Naive thymus-derived CD4-positive, alpha-beta T cell (primary cell): ENCODE measurements at regions of chr19 and their contacts with region 1.

Region 1: DNA sequence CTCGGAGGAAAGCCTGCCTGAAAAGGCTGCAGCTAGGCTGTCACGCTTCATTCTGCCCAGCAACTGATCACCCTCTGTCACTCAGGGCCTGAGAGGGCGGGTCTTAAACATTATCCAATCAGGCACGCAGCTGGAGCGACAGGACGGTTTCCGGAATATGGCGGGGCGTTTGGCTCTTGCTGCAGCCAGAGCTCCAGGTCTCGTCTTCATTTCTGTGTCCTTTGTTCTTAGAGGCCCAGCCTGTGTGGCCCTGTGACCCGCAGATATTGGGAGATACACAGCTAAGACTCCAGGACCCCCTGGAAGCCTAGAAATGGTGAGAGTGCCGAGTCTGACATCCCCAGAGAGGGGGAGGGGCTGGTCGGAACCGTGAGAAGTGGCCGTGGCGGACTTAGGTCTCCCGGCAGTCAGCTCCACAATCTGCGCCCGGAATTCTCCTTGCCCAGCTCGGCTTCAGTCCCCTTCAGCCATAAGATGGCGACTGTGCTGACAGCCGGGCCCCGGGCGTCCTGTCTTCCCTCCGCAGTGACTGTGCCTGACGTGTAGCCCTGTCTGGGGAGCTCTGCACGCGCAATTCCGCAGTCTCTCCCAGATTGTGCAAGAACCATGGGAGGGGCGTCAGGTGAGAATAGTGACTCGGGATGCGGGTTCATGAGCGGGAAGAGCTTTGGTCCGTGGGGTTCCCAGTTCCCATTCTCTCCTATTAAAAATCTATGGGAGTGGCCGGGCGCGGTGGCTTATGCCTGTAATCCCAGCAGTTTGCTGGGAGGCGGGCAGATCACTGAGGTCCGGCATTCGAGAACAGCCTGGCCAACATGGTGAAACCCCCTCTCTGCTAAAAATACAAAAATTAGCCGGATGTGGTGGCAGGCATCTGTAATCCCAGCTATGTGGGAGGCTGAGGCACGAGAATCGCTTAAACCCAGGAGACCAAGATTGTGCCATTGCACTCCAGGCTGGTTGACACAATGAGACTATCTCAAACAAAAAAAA is at the start of gene ZNF429:
- DNase-seq: peak; percentile 64 to 94 (median 90)
- ATAC-seq: peak; percentile 100
- H3K4me3 ChIP-seq: peak within 1 kb of the TSS; percentile 100
- H3K4me3 Mint-ChIP-seq: peak within 1 kb of the TSS; percentile 97 to 100 (median 100)
- H3K27ac ChIP-seq: peak within 1 kb of the TSS; percentile 94
- H3K27ac Mint-ChIP-seq: peak within 1 kb of the TSS; percentile 98 to 100 (median 99)
- H3K4me1 ChIP-seq: peaks cover 16 to 27% of the 10 kb centered on the region in 2 donors
- H3K4me1 Mint-ChIP-seq: peaks cover 8 to 56% (median 50%) of the 10 kb centered on the region in 7 donors
- H3K27me3 ChIP-seq: no peaks in the 10 kb centered on the region
- H3K27me3 Mint-ChIP-seq: no peaks in the 10 kb centered on the region
- total RNA-seq, gene ZNF429: 6.4 to 30.7 (median 25.0) TPM

Region 2: GRCh38 chr19:20077791-20078463 is 1427.8 kb before region 1 on chr19 and contains the start of gene ZNF90:
- CTCF ChIA-PET with region 1: no interaction called
- POLR2A ChIA-PET with region 1: no interaction called
- intact Hi-C with region 1: loop called in 1 of 2 experiments (anchors 5 kb)
- DNase-seq: peak; percentile 57 to 90 (median 84)
- ATAC-seq: peak; percentile 99
- H3K4me3 ChIP-seq: peak within 1 kb of the TSS; percentile 86
- H3K4me3 Mint-ChIP-seq: peak within 1 kb of the TSS; percentile 86 to 89 (median 88)
- H3K27ac ChIP-seq: no peak within 1 kb of the TSS
- H3K27ac Mint-ChIP-seq: peak within 1 kb of the TSS; percentile 31 to 82 (median 54)
- H3K4me1 ChIP-seq: peaks cover 4 to 8% of the 10 kb centered on the region in 2 donors
- H3K4me1 Mint-ChIP-seq: peaks cover 0 to 27% (median 14%) of the 10 kb centered on the region in 7 donors
- H3K27me3 ChIP-seq: no peaks in the 10 kb centered on the region
- H3K27me3 Mint-ChIP-seq: no peaks in the 10 kb centered on the region
- total RNA-seq, gene ZNF90: 3.4 to 7.7 (median 4.5) TPM

Region 3: GRCh38 chr19:20776083-20777076 is 729.4 kb before region 1 on chr19 and contains the start of gene ZNF66:
- CTCF ChIA-PET with region 1: no interaction called
- POLR2A ChIA-PET with region 1: no interaction called
- intact Hi-C with region 1: loop called (anchors 1 to 5 kb)
- DNase-seq: peak; percentile 84 to 96 (median 95)
- ATAC-seq: peak; percentile 99
- H3K4me3 ChIP-seq: peak within 1 kb of the TSS; percentile 99
- H3K4me3 Mint-ChIP-seq: peak within 1 kb of the TSS; percentile 92 to 100 (median 99)
- H3K27ac ChIP-seq: peak within 1 kb of the TSS; percentile 81
- H3K27ac Mint-ChIP-seq: peak within 1 kb of the TSS; percentile 86 to 97 (median 93)
- H3K4me1 ChIP-seq: peaks cover 0 to 5% of the 10 kb centered on the region in 2 donors
- H3K4me1 Mint-ChIP-seq: peaks cover 3 to 44% (median 31%) of the 10 kb centered on the region in 7 donors
- H3K27me3 ChIP-seq: no peaks in the 10 kb centered on the region
- H3K27me3 Mint-ChIP-seq: no peaks in the 10 kb centered on the region
- total RNA-seq, gene ZNF66: 7.6 to 18.5 (median 12.2) TPM

Region 4: DNA sequence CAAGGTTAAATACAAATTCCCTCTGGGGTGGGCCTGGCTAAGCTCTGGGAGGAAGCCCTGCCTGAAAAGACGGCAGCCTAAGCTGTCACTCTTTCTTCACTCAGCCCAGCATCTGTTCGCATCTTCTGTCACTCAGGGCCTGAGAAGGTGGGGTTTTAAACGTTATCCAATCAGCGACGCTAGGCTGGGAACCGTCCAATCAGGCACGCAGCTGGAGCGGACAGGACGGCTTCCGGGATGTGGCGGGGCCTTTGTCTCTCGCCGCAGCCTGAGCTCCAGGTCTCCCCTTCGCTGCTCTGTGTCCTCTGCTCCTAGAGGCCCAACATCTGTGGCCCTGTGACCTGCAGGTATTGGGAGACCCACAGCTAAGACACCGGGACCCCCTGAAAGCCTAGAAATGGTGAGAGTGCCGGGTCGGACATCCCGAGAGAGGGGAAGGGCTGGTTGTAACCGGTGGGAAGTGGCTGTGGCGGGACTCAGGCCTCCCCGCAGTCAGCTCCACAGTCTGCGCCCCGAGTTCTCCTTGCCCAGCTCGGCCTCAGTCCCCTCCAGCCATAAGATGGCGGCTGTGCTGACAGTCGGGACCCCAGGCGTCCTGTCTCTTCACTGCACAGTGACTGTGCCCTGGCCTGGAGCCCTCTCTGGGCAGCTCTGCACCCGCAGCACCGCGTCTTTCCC is 363.8 kb before region 1 on chr19 and contains the start of gene ZNF431:
- CTCF ChIA-PET with region 1: interaction called, 3 read pairs
- POLR2A ChIA-PET with region 1: interaction called, 12 read pairs
- intact Hi-C with region 1: loop called in 1 of 2 experiments (anchors 1 kb)
- DNase-seq: peak; percentile 63 to 95 (median 91)
- ATAC-seq: peak; percentile 100
- H3K4me3 ChIP-seq: peak within 1 kb of the TSS; percentile 94
- H3K4me3 Mint-ChIP-seq: peak within 1 kb of the TSS; percentile 95 to 98 (median 97)
- H3K27ac ChIP-seq: peak within 1 kb of the TSS; percentile 91
- H3K27ac Mint-ChIP-seq: peak within 1 kb of the TSS; percentile 93 to 99 (median 96)
- H3K4me1 ChIP-seq: peaks cover 3 to 6% of the 10 kb centered on the region in 2 donors
- H3K4me1 Mint-ChIP-seq: peaks cover 20 to 69% (median 54%) of the 10 kb centered on the region in 7 donors
- H3K27me3 ChIP-seq: no peaks in the 10 kb centered on the region
- H3K27me3 Mint-ChIP-seq: no peaks in the 10 kb centered on the region
- total RNA-seq, gene ZNF431: 19.1 to 36.8 (median 25.4) TPM

Region 5: DNA sequence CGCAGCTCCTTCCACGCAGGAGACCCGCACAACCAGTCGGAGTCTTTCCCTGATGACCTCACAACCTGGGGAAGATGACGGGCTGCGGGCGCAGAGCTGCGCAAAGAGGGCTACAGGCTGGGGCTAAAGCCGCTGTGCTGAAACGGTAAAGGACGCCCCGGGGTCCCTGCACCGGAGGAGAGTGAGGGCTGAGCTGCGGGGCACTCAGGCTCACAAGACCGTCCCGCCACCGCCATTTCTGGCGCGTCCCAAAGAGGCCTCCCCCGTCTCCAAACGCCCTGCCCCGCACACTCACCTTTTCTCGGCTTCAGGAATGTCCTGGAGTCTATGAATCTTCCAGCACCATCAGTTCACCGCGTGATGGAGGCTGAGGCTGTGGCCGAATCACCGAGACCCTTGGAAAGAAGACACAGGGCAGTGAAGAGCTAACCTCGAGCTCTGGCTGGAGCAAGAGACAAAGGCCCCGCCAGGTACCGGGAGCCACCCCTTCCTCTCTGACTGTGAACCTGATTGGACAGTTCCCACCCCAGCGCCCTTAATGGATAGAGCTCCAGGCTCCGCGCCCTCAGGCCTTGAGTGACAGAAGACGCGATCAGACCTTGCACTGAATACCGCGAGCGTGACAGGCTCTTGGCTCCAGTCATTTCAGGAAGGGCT is 42.2 kb before region 1 on chr19:
- CTCF ChIA-PET with region 1: no interaction called
- POLR2A ChIA-PET with region 1: no interaction called
- intact Hi-C with region 1: no loop called
- DNase-seq: peak in 4 of 9 donors; percentile 17 to 55 (median 28)
- ATAC-seq: peak; percentile 91
- H3K4me3 ChIP-seq: peak overlapping the region; percentile 50
- H3K4me3 Mint-ChIP-seq: peak overlapping the region in 9 of 10 donors; percentile 61 to 90 (median 84)
- H3K27ac ChIP-seq: no peak overlapping the region
- H3K27ac Mint-ChIP-seq: peak overlapping the region in 2 of 9 donors; percentile 16 to 72
- H3K4me1 ChIP-seq: no peaks in the 10 kb centered on the region
- H3K4me1 Mint-ChIP-seq: peaks cover 0 to 9% (median 3%) of the 10 kb centered on the region in 7 donors
- H3K27me3 ChIP-seq: no peaks in the 10 kb centered on the region
- H3K27me3 Mint-ChIP-seq: peaks cover 0 to 18% (median 12%) of the 10 kb centered on the region in 5 donors

Region 6: DNA sequence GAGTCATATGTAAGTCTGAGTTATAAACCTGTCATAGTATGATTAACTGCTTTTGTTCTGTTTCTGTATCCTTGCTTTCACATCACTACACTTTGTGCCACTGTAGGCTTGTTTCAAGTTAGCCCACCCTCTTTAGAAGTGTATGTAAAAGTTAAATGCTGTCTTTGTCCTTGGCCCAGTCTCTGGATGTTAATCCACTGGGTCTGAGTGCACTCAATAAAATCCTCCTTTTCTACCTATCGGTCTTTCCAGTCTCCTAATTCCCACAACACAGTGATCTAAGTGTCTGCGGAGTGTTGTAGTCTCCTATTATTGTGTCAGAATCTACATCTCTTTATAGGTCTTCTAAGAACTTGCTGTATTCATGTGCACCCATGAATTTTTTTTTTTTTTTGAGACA is 13.7 kb after region 1 on chr19:
- CTCF ChIA-PET with region 1: interaction called, 3 read pairs
- POLR2A ChIA-PET with region 1: interaction called, 12 read pairs
- intact Hi-C with region 1: no loop called
- DNase-seq: no peak
- ATAC-seq: no peak
- H3K4me3 ChIP-seq: peak overlapping the region; percentile 11
- H3K4me3 Mint-ChIP-seq: peak overlapping the region in 1 of 10 donors; percentile 5
- H3K27ac ChIP-seq: no peak overlapping the region
- H3K27ac Mint-ChIP-seq: peak overlapping the region in 1 of 9 donors; percentile 18
- H3K4me1 ChIP-seq: no peaks in the 10 kb centered on the region
- H3K4me1 Mint-ChIP-seq: peaks cover 0 to 30% (median 15%) of the 10 kb centered on the region in 7 donors
- H3K27me3 ChIP-seq: no peaks in the 10 kb centered on the region
- H3K27me3 Mint-ChIP-seq: no peaks in the 10 kb centered on the region

Region 7: GRCh38 chr19:21677696-21678418 is 172.1 kb after region 1 on chr19:
- CTCF ChIA-PET with region 1: no interaction called
- POLR2A ChIA-PET with region 1: interaction called, 3 read pairs
- intact Hi-C with region 1: loop called in 1 of 2 experiments (anchors 5 kb)
- DNase-seq: peak in 2 of 9 donors; percentile 4 to 8
- ATAC-seq: peak; percentile 57
- H3K4me3 ChIP-seq: peak overlapping the region; percentile 20
- H3K4me3 Mint-ChIP-seq: peak overlapping the region in 8 of 10 donors; percentile 6 to 76 (median 63)
- H3K27ac ChIP-seq: no peak overlapping the region
- H3K27ac Mint-ChIP-seq: peak overlapping the region in 4 of 9 donors; percentile 16 to 70 (median 36)
- H3K4me1 ChIP-seq: no peaks in the 10 kb centered on the region
- H3K4me1 Mint-ChIP-seq: peaks cover 0 to 22% (median 0%) of the 10 kb centered on the region in 7 donors
- H3K27me3 ChIP-seq: no peaks in the 10 kb centered on the region
- H3K27me3 Mint-ChIP-seq: peaks cover 0 to 7% (median 3%) of the 10 kb centered on the region in 5 donors

Region 8: GRCh38 chr19:21851596-21852345 is 346.0 kb after region 1 on chr19:
- CTCF ChIA-PET with region 1: no interaction called
- POLR2A ChIA-PET with region 1: interaction called, 10 read pairs
- intact Hi-C with region 1: loop called in 1 of 2 experiments (anchors 1 kb)
- DNase-seq: peak; percentile 71 to 90 (median 88)
- ATAC-seq: peak; percentile 99
- H3K4me3 ChIP-seq: peak overlapping the region; percentile 98
- H3K4me3 Mint-ChIP-seq: peak overlapping the region; percentile 89 to 96 (median 92)
- H3K27ac ChIP-seq: peak overlapping the region; percentile 90
- H3K27ac Mint-ChIP-seq: peak overlapping the region; percentile 68 to 96 (median 92)
- H3K4me1 ChIP-seq: peaks cover 6 to 10% of the 10 kb centered on the region in 2 donors
- H3K4me1 Mint-ChIP-seq: peaks cover 8 to 34% (median 27%) of the 10 kb centered on the region in 7 donors
- H3K27me3 ChIP-seq: no peaks in the 10 kb centered on the region
- H3K27me3 Mint-ChIP-seq: peaks cover 0 to 1% (median 0%) of the 10 kb centered on the region in 5 donors